ENCODE measurements at regions of chr5 and their contacts with region 1.

Region 1: DNA sequence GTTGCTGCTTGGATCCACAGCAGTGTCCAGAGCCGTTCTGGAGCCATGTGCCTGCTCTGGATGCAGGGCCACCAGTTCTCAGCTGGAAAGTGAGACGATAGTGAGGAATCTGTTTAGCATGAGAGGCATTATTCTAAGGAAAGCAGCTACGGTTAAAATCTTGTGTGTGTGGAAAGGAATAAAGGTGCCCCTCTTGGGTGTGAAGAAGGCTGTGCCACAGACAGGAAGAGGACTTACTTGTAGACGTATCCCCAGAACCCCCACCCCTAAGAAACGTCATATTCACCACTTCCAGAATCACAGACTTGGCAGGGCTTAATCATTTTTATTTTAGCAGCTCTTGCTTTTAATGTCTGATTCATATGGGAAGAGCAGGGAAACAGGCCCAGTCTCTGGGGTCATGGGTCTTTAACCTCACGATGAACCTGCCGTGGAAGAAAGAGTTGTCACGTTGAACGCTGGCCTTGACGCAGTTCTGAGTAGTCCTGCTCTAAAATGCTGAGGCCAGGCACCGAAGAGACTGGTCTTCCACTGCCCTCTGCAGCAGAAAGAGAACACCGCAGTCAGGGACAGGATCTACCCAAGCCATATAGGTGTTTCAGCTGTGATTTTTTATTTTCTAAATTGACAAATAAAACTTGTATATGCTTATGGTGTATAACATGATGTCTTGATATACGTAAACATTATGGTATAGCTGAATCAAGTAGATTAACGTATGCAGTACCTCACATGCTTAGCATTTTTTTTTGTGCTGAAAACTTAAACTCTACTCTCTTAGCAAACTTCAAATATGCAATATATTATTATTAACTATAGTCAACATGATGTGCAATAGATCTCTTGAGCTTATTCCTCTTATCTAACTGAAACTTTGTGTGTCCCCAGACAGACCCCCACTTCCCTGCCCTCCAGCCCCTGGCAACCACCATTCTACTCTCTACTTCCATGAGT is 38.8 kb downstream of the CARTPT start:
- DNase-seq: peak; percentile 65
- ATAC-seq: peak; percentile 100
- H3K4me3 ChIP-seq: peak overlapping the region; percentile 3 to 44; a peak in 3 of 4 replicates
- H3K27ac ChIP-seq: no peak overlapping the region
- H3K4me1 ChIP-seq: no peaks in the 10 kb centered on the region
- H3K27me3 ChIP-seq: peaks cover 4% of the 10 kb centered on the region
- CTCF ChIP-seq: peak; percentile 91

Region 2: DNA sequence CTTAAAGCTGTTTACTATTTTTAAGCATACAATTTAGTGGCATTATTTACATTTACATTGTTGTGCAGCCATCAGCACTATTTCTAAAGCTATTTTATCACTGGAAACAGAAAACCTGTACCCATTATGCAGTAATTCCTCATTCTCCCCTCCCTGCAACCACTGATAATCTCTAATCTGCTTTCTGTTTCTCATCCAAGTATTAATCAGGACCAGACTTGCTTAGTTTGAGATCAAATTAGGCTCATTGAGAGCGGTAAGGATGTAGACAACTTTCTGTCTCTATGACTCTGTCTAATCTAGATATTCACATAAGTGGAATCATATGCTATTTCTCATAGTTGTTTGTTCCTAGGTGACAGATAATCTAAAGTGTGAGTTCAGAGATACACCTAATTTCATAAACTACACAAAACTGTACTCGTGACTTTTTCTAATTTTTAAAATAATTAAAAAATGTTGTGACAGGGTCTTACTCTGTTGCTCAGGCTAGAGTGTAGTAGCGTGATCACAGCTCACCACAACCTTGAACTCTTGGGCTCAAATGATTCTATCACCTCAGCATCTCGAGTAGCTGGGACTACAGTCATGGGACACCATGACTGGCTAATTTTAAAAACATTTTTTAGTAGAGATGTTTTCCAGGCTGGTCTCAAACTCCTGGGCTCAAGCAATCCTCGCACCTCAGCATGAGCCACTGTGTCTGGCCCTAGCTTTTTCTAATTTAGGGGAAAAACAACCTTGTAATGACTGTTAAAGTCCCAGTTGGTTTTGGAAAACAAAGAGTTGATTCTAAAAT is 264.9 kb before region 1 on chr5:
- CTCF ChIA-PET with region 1: no interaction called
- POLR2A ChIA-PET with region 1: no interaction called
- in situ Hi-C with region 1: no loop called
- intact Hi-C with region 1: loop called (anchors 10 kb)
- DNase-seq: no peak
- ATAC-seq: no peak
- H3K4me3 ChIP-seq: no peak overlapping the region
- H3K27ac ChIP-seq: no peak overlapping the region
- H3K4me1 ChIP-seq: no peaks in the 10 kb centered on the region
- H3K27me3 ChIP-seq: no peaks in the 10 kb centered on the region
- CTCF ChIP-seq: no peak

Region 3: GRCh38 chr5:71569748-71570509 is 187.9 kb before region 1 on chr5:
- CTCF ChIA-PET with region 1: no interaction called
- POLR2A ChIA-PET with region 1: no interaction called
- in situ Hi-C with region 1: no loop called
- intact Hi-C with region 1: loop called (anchors 10 kb)
- DNase-seq: no peak
- ATAC-seq: peak; percentile 38; the same call in 1 of the 2 replicates
- H3K4me3 ChIP-seq: no peak overlapping the region
- H3K27ac ChIP-seq: no peak overlapping the region
- H3K4me1 ChIP-seq: no peaks in the 10 kb centered on the region
- H3K27me3 ChIP-seq: no peaks in the 10 kb centered on the region
- CTCF ChIP-seq: no peak

Region 4: GRCh38 chr5:71663570-71663969 is 94.3 kb before region 1 on chr5:
- CTCF ChIA-PET with region 1: no interaction called
- POLR2A ChIA-PET with region 1: no interaction called
- in situ Hi-C with region 1: no loop called
- intact Hi-C with region 1: loop called (anchors 10 kb)
- DNase-seq: no peak
- ATAC-seq: no peak
- H3K4me3 ChIP-seq: no peak overlapping the region
- H3K27ac ChIP-seq: no peak overlapping the region
- H3K4me1 ChIP-seq: no peaks in the 10 kb centered on the region
- H3K27me3 ChIP-seq: no peaks in the 10 kb centered on the region
- CTCF ChIP-seq: no peak

Region 5: GRCh38 chr5:71790433-71790832 is 32.6 kb after region 1 on chr5:
- CTCF ChIA-PET with region 1: no interaction called
- POLR2A ChIA-PET with region 1: no interaction called
- in situ Hi-C with region 1: no loop called
- intact Hi-C with region 1: no loop called
- DNase-seq: no peak
- ATAC-seq: no peak
- H3K4me3 ChIP-seq: no peak overlapping the region
- H3K27ac ChIP-seq: no peak overlapping the region
- H3K4me1 ChIP-seq: no peaks in the 10 kb centered on the region
- H3K27me3 ChIP-seq: peaks cover 11% of the 10 kb centered on the region
- CTCF ChIP-seq: no peak